ENCODE measurements at regions of chr2 and their contacts with region 1.

Region 1: DNA sequence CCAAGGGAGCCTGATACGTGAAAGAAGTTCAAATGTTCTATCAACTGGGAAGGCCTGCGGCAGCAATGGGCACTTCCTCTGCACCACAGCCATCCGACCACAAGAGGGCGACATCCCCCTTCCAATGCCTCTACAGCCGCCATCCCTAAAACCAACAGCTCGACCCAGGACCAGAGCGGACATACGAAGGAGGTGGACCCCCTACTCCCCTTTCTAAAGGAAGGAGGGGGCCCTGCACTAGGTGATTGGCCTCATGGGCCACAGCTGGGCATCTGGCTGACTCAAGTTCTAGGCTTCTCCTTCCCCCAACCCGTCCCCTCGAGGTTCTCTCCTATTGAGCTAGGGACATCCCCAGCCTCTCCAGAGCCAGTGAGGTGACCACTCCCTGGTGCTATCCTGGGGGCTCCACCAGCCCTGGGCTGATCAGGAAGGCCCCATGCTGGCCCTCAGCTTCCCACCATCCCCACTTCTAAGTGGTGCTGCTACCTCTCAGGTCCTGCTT is 217.2 kb downstream of the TNS1 start:
- DNase-seq: peak; percentile 53 to 96
- H3K4me3 ChIP-seq: no peak overlapping the region
- H3K27ac ChIP-seq: no peak overlapping the region
- H3K4me1 ChIP-seq: peaks cover 0 to 2% (median 0%) of the 10 kb centered on the region in 4 experiments; a peak in 1 of 7 replicates
- H3K27me3 ChIP-seq: no peaks in the 10 kb centered on the region; a peak in 1 of 7 replicates
- CTCF ChIP-seq: peak; percentile 93 to 98 (median 96)
- EP300 ChIP-seq: no peak
- POLR2A ChIP-seq: no peak
- RAD21 ChIP-seq: peak; percentile 98 to 100

Region 2: GRCh38 chr2:217585362-217585761 is 200.2 kb before region 1 on chr2:
- CTCF ChIA-PET with region 1: no interaction called
- POLR2A ChIA-PET with region 1: no interaction called
- DNase-seq: no peak
- H3K4me3 ChIP-seq: no peak overlapping the region
- H3K27ac ChIP-seq: no peak overlapping the region
- H3K4me1 ChIP-seq: no peaks in the 10 kb centered on the region
- H3K27me3 ChIP-seq: no peaks in the 10 kb centered on the region
- CTCF ChIP-seq: no peak
- EP300 ChIP-seq: no peak
- POLR2A ChIP-seq: no peak
- RAD21 ChIP-seq: no peak

Region 3: GRCh38 chr2:217816396-217816869 is 30.8 kb after region 1 on chr2:
- CTCF ChIA-PET with region 1: interaction called, 155 read pairs
- POLR2A ChIA-PET with region 1: no interaction called
- DNase-seq: no peak
- H3K4me3 ChIP-seq: no peak overlapping the region
- H3K27ac ChIP-seq: no peak overlapping the region
- H3K4me1 ChIP-seq: no peaks in the 10 kb centered on the region
- H3K27me3 ChIP-seq: no peaks in the 10 kb centered on the region
- CTCF ChIP-seq: no peak
- EP300 ChIP-seq: no peak
- POLR2A ChIP-seq: no peak
- RAD21 ChIP-seq: no peak

Region 4: GRCh38 chr2:217864963-217865772 is 79.6 kb after region 1 on chr2:
- CTCF ChIA-PET with region 1: interaction called, 46 read pairs
- POLR2A ChIA-PET with region 1: no interaction called
- DNase-seq: no peak
- H3K4me3 ChIP-seq: no peak overlapping the region
- H3K27ac ChIP-seq: no peak overlapping the region
- H3K4me1 ChIP-seq: peaks cover 0 to 6% (median 0%) of the 10 kb centered on the region in 4 experiments; a peak in 2 of 7 replicates
- H3K27me3 ChIP-seq: no peaks in the 10 kb centered on the region
- CTCF ChIP-seq: no peak
- EP300 ChIP-seq: no peak
- POLR2A ChIP-seq: no peak
- RAD21 ChIP-seq: no peak

Region 5: DNA sequence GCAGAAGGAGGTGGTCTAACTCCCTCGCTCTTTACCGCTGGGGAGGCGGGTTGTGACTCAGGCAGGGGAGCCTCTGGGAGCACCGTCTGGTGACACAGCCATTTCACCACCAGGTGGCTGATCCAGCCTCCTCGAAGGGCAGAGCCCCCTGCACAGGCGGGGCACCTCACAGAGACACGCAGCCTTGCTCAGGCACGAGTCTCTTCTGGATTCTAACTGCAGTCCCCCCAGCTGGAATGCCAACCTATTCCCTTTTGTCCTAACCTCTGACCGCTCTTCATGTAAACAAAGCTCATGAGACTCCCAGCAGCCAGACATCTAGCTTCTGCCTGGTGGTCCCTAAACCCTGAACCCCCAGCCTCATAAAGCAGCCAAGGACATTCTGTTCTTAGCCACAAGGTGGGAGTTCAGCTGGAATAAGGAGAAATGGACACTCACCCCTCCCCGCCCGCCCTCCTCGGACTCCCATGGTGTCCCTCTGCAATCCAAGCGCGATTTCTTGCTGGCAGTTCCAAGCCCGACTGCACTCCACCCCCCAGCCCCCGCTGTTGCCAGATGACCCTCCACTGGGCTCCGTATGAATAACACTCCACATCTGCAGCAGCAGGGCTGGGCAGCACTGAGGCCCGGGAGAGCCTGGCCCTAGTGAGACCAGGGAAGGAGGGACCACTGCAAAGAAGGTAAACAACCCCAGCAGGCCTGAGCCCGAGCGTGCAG is 132.9 kb after region 1 on chr2:
- CTCF ChIA-PET with region 1: interaction called, 23 read pairs
- POLR2A ChIA-PET with region 1: interaction called, 3 read pairs
- DNase-seq: no peak
- H3K4me3 ChIP-seq: no peak overlapping the region
- H3K27ac ChIP-seq: no peak overlapping the region
- H3K4me1 ChIP-seq: peaks cover 9 to 48% (median 33%) of the 10 kb centered on the region in 4 experiments
- H3K27me3 ChIP-seq: peaks cover 0 to 4% (median 0%) of the 10 kb centered on the region in 4 experiments; a peak in 3 of 7 replicates
- CTCF ChIP-seq: peak; percentile 53 to 63 (median 55)
- EP300 ChIP-seq: no peak
- POLR2A ChIP-seq: no peak
- RAD21 ChIP-seq: peak in 1 of 2 experiments; percentile 45; a peak in 3 of 4 replicates

Region 6: GRCh38 chr2:217978536-217979165 is 193.1 kb after region 1 on chr2:
- CTCF ChIA-PET with region 1: interaction called, 353 read pairs
- POLR2A ChIA-PET with region 1: no interaction called
- DNase-seq: peak in 1 of 2 experiments; percentile 87
- H3K4me3 ChIP-seq: peak overlapping the region; percentile 37 to 78 (median 59)
- H3K27ac ChIP-seq: no peak overlapping the region
- H3K4me1 ChIP-seq: peaks cover 3 to 12% (median 7%) of the 10 kb centered on the region in 4 experiments
- H3K27me3 ChIP-seq: peaks cover 0 to 26% (median 20%) of the 10 kb centered on the region in 4 experiments; a peak in 6 of 7 replicates
- CTCF ChIP-seq: no peak
- EP300 ChIP-seq: no peak
- POLR2A ChIP-seq: peak in 1 of 2 experiments; percentile 25; a peak in 1 of 3 replicates
- RAD21 ChIP-seq: no peak

Region 7: GRCh38 chr2:218039171-218039570 is 253.6 kb after region 1 on chr2:
- CTCF ChIA-PET with region 1: interaction called, 57 read pairs
- POLR2A ChIA-PET with region 1: no interaction called
- DNase-seq: no peak
- H3K4me3 ChIP-seq: no peak overlapping the region
- H3K27ac ChIP-seq: no peak overlapping the region
- H3K4me1 ChIP-seq: peaks cover 0 to 1% (median 0%) of the 10 kb centered on the region in 4 experiments; a peak in 1 of 7 replicates
- H3K27me3 ChIP-seq: peaks cover 0 to 6% (median 3%) of the 10 kb centered on the region in 4 experiments; a peak in 6 of 7 replicates
- CTCF ChIP-seq: no peak
- EP300 ChIP-seq: no peak
- POLR2A ChIP-seq: no peak
- RAD21 ChIP-seq: no peak

Measured in H1 (cell line).